MCF 10A (cell line): ENCODE measurements at regions of chr6 and their contacts with region 1.

Region 1: GRCh38 chr6:73520688-73521350 is at the start of gene EEF1A1:
- DNase-seq: peak; percentile 100
- H3K4me3 Mint-ChIP-seq: peak within 1 kb of the TSS; percentile 88
- H3K27ac Mint-ChIP-seq: peak within 1 kb of the TSS; percentile 99
- H3K4me1 Mint-ChIP-seq: peaks cover 12% of the 10 kb centered on the region
- H3K27me3 Mint-ChIP-seq: no peaks in the 10 kb centered on the region
- CTCF ChIP-seq: no peak
- total RNA-seq, gene EEF1A1: 13,507 and 14,346 TPM in 2 replicates

Region 2: GRCh38 chr6:73491377-73491776 is 29.4 kb before region 1 on chr6:
- CTCF ChIA-PET with region 1: no interaction called
- POLR2A ChIA-PET with region 1: no interaction called
- intact Hi-C with region 1: no loop called
- DNase-seq: no peak
- H3K4me3 Mint-ChIP-seq: no peak overlapping the region
- H3K27ac Mint-ChIP-seq: no peak overlapping the region
- H3K4me1 Mint-ChIP-seq: no peaks in the 10 kb centered on the region
- H3K27me3 Mint-ChIP-seq: no peaks in the 10 kb centered on the region
- CTCF ChIP-seq: no peak

Region 3: DNA sequence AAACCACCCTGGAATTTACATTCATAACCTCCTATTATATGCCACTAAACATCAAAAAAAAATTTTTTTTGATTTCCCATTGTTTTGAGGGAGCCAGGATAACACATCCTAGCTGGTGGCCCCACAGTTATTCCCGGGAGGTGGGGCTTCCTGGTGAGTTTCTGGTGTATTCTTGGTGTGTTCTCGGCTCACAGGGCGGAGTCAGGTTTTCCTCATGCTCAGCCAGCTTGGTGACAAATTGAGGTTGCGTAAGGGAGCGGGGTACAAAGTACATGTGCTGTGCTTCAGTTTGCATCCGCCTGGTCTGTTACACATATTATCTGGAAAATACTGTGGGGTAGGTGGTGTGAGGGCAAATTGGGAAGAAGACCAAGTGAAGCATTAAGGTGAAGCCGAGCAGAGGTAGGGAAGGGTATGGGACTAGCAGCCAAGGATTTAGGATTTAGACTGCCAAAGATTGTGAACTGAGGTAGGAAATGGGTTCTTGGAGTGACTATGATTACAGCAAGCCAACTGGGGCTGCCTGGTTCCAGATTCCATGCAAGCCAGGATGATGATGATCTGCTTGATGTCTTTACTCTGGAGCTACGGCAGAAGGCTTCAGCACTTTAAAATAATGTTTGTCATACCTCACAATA is 46.3 kb after region 1 on chr6:
- CTCF ChIA-PET with region 1: interaction called, 3 read pairs
- POLR2A ChIA-PET with region 1: interaction called, 48 read pairs
- intact Hi-C with region 1: loop called (anchors 5 kb)
- DNase-seq: peak; percentile 88
- H3K4me3 Mint-ChIP-seq: peak overlapping the region; percentile 21
- H3K27ac Mint-ChIP-seq: peak overlapping the region; percentile 77
- H3K4me1 Mint-ChIP-seq: peaks cover 10% of the 10 kb centered on the region
- H3K27me3 Mint-ChIP-seq: no peaks in the 10 kb centered on the region
- CTCF ChIP-seq: no peak

Region 4: DNA sequence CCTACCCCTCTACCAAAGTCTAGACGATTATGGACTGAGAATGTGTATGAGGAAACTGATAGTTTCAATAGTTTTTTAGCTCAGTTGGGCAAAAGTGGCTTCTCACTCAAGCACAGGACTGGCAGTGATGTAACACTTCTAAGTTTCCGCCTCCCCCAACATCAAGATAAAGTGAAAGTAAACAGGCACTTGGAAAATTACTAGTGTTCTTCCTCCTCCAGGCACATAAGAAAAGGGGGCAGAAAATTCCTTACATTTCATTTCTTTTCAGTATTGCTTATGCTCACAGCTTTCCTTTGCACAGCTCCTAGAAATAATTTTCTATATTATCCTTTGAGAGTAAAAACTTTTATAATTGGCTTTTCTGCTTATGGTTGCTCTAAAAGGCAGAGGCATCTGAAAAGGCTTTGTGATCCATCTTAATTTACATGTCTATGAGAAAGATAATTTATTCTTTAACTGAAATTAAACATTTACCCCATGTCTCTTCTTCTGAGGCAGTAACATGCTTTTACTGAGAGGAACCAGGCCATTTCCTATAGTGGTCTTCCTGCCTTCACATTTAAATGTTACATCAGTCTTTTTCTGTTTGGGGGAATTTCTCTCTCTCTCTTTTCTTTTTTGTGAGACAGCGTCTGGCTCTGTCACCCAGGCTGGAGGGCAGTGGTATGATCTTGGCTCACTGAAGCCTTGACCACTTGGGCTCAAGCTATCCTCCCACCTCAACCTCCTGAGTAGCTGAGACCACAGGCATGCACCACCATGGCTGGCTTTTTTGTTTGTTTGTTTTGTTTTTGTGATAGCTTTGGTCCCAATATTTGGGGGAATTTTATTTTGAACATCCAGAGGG is 65.0 kb after region 1 on chr6:
- CTCF ChIA-PET with region 1: interaction called, 15 read pairs
- POLR2A ChIA-PET with region 1: interaction called, 244 read pairs
- intact Hi-C with region 1: loop called (anchors 1 kb)
- DNase-seq: peak; percentile 79
- H3K4me3 Mint-ChIP-seq: peak overlapping the region; percentile 63
- H3K27ac Mint-ChIP-seq: peak overlapping the region; percentile 98
- H3K4me1 Mint-ChIP-seq: peaks cover 10% of the 10 kb centered on the region
- H3K27me3 Mint-ChIP-seq: no peaks in the 10 kb centered on the region
- CTCF ChIP-seq: no peak

Region 5: GRCh38 chr6:73644941-73645591 is 124.2 kb after region 1 on chr6:
- CTCF ChIA-PET with region 1: interaction called, 3 read pairs
- POLR2A ChIA-PET with region 1: interaction called, 65 read pairs
- intact Hi-C with region 1: no loop called
- DNase-seq: no peak
- H3K4me3 Mint-ChIP-seq: peak overlapping the region; percentile 79
- H3K27ac Mint-ChIP-seq: peak overlapping the region; percentile 90
- H3K4me1 Mint-ChIP-seq: peaks cover 34% of the 10 kb centered on the region
- H3K27me3 Mint-ChIP-seq: no peaks in the 10 kb centered on the region
- CTCF ChIP-seq: no peak

Region 6: DNA sequence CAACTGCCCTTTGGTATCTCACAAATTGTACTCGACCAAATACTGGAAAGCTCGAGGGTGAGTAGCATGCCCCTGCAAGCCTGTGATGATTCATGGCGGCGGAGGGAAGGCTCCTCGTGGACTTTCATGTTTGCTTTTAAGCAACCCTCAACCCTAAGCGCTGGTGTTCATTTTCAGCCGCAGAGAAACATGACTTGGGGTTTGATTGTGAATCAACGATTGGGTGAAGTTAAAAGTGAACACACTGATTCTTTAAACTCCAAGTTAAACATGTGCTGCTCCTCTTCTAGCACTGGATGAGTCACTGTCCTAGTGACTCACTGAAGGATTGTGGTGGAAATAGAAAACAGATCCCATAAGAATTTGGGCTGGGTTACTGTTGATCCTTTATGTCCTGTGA is 183.4 kb after region 1 on chr6:
- CTCF ChIA-PET with region 1: no interaction called
- POLR2A ChIA-PET with region 1: interaction called, 19 read pairs
- intact Hi-C with region 1: no loop called
- DNase-seq: peak; percentile 99
- H3K4me3 Mint-ChIP-seq: no peak overlapping the region
- H3K27ac Mint-ChIP-seq: no peak overlapping the region
- H3K4me1 Mint-ChIP-seq: peaks cover 30% of the 10 kb centered on the region
- H3K27me3 Mint-ChIP-seq: no peaks in the 10 kb centered on the region
- CTCF ChIP-seq: no peak